MCF 10A (cell line): ENCODE measurements at regions of chr11 and their contacts with region 1.

Region 1: DNA sequence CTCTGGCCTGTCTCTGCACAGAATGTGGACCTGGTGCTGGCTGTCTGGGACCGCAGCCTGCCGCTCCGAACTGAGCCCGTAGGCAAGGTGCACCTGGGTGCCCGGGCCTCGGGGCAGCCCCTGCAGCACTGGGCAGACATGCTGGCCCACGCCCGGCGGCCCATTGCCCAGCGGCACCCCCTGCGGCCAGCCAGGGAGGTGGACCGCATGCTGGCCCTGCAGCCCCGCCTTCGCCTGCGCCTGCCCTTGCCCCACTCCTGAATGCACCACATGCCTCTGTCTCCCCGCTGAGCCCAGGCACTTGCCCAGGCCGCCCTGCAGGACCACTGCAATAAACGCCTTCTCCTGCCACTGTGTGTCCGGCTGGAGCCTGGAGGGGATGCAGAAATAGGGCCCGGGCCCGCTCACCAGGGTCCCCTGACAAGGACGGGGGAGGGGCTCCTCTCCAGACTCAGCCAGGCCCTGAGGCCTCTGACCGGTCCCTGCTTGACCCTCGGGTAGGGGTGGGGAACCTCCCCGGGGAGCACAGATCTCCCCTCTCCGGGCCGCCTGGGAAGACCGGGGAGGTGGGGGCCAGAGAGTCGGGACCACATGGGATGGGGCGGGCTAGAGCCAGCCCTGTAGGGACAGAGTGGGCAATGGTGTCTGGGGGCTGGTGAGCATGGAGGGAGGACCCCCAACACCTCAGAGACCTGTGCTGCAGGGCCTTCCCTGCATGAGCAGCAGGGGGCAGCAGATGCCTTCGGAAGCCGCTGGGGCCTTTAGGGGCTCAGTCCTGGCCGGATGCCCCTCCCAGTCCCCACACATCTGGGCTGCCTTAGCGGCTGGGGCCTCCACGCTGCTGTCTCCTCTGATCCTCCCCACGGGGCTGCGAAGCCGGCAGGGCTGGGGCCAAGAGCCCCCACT is 1.4 kb upstream of the TNNI2 start:
- DNase-seq: peak; percentile 65
- H3K4me3 Mint-ChIP-seq: peak overlapping the region; percentile 78
- H3K27ac Mint-ChIP-seq: no peak overlapping the region
- H3K4me1 Mint-ChIP-seq: peaks cover 21% of the 10 kb centered on the region
- H3K27me3 Mint-ChIP-seq: no peaks in the 10 kb centered on the region
- CTCF ChIP-seq: peak; percentile 94

Region 2: DNA sequence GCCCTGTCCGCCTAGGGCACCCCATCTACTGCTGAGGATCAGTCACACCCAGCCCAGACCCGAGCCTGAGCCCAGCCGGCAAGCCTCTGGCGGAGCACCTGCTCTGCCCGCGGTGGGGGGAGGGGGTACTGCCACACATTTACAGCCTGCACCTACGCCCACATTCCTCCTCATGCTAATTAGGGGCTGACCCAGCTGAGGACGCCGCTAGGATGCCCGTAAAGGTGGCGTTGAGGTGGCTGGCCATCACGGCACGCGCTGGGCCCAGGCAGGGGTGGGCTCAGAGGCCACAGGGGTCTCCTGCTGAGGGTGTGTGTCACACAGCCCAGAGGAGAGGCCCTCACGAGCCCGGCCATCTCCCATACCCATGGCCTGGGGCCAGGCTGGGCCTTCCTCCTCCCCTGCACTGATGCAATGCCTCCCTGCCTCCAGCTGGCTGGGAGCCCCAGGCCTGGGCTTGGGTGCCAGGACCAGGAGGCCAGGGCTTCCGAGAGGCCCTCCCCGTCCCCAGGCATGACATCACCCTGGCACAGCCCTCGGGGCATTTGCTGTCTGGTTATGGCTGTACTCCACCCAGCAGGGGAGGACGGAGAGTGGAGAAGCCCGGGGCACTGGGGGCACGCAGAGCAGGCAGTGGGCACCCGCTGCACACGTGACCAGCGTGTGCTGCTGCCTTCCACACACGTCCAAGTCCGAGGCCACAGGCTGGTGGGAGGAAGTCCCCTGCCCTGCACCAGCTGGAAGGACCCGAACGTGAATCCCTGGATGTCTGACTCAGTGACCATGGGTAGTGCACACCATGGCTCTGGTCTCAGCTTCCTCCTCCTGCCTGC is 278.1 kb before region 1 on chr11:
- CTCF ChIA-PET with region 1: no interaction called
- POLR2A ChIA-PET with region 1: no interaction called
- intact Hi-C with region 1: loop called (anchors 10 kb)
- DNase-seq: peak; percentile 96
- H3K4me3 Mint-ChIP-seq: peak overlapping the region; percentile 52
- H3K27ac Mint-ChIP-seq: peak overlapping the region; percentile 49
- H3K4me1 Mint-ChIP-seq: peaks cover 26% of the 10 kb centered on the region
- H3K27me3 Mint-ChIP-seq: no peaks in the 10 kb centered on the region
- CTCF ChIP-seq: no peak

Region 3: GRCh38 chr11:1763796-1764661 is 73.4 kb before region 1 on chr11 and contains the start of gene CTSD:
- CTCF ChIA-PET with region 1: interaction called, 45 read pairs
- POLR2A ChIA-PET with region 1: interaction called, 115 read pairs
- intact Hi-C with region 1: no loop called
- DNase-seq: peak; percentile 76
- H3K4me3 Mint-ChIP-seq: peak within 1 kb of the TSS; percentile 77
- H3K27ac Mint-ChIP-seq: peak within 1 kb of the TSS; percentile 39
- H3K4me1 Mint-ChIP-seq: peaks cover 10% of the 10 kb centered on the region
- H3K27me3 Mint-ChIP-seq: no peaks in the 10 kb centered on the region
- CTCF ChIP-seq: no peak
- total RNA-seq, gene CTSD: 366 and 367 TPM in 2 replicates

Region 4: DNA sequence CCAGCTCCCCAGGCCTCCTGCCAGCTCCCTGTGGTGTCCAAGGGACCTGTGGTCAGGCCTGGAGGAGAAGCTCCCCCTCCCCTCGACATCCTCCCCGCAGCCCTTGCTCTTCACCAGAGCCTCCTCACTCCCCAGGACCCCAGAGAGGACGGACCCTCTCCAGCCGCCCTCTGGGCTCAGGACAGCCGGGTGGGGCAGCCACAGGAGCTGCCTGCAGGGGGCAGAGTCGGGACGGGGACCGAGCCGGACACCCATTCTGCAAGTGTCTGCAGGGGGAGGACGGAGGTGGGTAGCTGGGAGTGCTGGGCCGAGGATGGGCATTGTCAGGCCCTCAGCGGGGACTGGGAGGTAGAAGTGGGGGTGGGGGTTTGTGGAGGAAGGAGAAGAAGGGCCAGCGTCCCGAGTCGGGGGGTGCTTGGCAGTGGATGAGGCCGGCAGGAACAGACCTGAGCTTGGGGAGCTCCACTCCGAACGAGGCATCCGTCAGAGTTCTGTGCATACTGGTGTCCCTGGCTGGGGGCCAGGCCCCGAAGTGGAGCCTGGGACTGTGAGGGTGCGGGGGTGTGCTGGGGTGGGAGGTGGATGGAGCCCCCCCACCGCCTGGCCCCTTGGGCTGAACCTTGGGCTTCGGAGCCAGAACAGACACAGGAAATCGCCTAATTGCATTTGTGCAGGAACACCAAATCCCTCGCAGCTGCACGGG is 39.1 kb after region 1 on chr11:
- CTCF ChIA-PET with region 1: interaction called, 10 read pairs
- POLR2A ChIA-PET with region 1: interaction called, 3 read pairs
- intact Hi-C with region 1: loop called (anchors 5 kb)
- DNase-seq: peak; percentile 80
- H3K4me3 Mint-ChIP-seq: peak overlapping the region; percentile 73
- H3K27ac Mint-ChIP-seq: peak overlapping the region; percentile 83
- H3K4me1 Mint-ChIP-seq: peaks cover 29% of the 10 kb centered on the region
- H3K27me3 Mint-ChIP-seq: no peaks in the 10 kb centered on the region
- CTCF ChIP-seq: peak; percentile 62

Region 5: GRCh38 chr11:1917671-1918516 is 80.5 kb after region 1 on chr11:
- CTCF ChIA-PET with region 1: interaction called, 3 read pairs
- POLR2A ChIA-PET with region 1: no interaction called
- intact Hi-C with region 1: loop called (anchors 1 kb)
- DNase-seq: no peak
- H3K4me3 Mint-ChIP-seq: no peak overlapping the region
- H3K27ac Mint-ChIP-seq: no peak overlapping the region
- H3K4me1 Mint-ChIP-seq: no peaks in the 10 kb centered on the region
- H3K27me3 Mint-ChIP-seq: peaks cover 25% of the 10 kb centered on the region
- CTCF ChIP-seq: peak; percentile 38

Region 6: DNA sequence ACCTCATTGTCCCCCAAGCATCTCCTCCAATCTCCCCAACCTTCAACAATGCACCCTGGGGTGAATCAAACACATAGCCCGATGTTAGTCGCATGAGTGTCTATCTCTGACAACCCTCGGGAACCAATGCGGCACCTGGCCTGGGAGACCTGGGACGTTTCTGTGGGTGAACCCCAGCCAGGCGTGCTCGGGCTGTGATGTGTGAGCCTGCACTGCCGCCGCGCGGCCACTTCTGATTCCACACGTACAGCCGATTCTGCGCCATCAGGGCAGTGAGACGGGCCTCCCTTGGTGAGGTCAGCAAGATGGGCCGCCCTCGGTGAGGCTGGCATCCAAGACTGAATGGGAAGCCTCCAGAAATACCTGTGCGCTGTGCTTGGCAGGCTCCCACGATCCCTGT is 165.4 kb after region 1 on chr11:
- CTCF ChIA-PET with region 1: interaction called, 42 read pairs
- POLR2A ChIA-PET with region 1: interaction called, 4 read pairs
- intact Hi-C with region 1: no loop called
- DNase-seq: no peak
- H3K4me3 Mint-ChIP-seq: no peak overlapping the region
- H3K27ac Mint-ChIP-seq: no peak overlapping the region
- H3K4me1 Mint-ChIP-seq: no peaks in the 10 kb centered on the region
- H3K27me3 Mint-ChIP-seq: no peaks in the 10 kb centered on the region
- CTCF ChIP-seq: no peak

Region 7: GRCh38 chr11:2128130-2128510 is 290.7 kb after region 1 on chr11:
- CTCF ChIA-PET with region 1: no interaction called
- POLR2A ChIA-PET with region 1: no interaction called
- intact Hi-C with region 1: no loop called
- DNase-seq: no peak
- H3K4me3 Mint-ChIP-seq: no peak overlapping the region
- H3K27ac Mint-ChIP-seq: no peak overlapping the region
- H3K4me1 Mint-ChIP-seq: no peaks in the 10 kb centered on the region
- H3K27me3 Mint-ChIP-seq: peaks cover 71% of the 10 kb centered on the region
- CTCF ChIP-seq: no peak